Activated naive CD4-positive, alpha-beta T cell treated with anti-CD3 and anti-CD28 coated beads, Interleukin-2, amount 10 ng/mL, durations not matched to agents 7 days and 5 days (primary cell): ENCODE measurements at regions of chr12 and their contacts with region 1.

Region 1: DNA sequence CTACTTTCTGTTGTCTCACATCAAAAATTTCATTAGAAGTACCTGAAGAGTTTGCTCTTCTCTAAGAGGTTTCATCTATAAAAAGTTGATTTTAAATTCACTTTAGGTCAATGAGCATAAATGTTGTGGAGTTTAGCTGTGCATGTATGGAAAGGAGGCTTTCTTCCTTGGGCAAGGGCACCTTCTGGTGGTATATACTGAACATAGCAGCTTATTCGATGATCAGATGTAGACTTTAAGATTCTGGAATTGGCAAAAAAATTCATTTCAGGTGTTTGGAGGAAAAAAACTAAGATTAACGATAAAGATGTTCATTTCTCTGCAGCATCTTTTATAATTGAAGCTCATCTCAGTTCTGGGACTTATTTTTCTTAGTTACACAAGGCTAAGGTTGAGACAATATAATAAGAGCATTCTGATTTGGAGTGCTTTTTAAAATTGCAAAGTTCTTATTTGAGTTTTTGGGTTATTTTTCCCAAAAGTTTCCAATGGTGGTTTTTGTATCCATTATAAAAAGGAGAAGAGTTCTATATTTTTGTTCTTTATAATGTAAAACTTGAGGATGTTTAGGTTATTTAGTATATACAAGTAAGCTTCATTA is 46.8 kb downstream of the TMEM117 start:
- DNase-seq: peak; percentile 45
- H3K4me3 Mint-ChIP-seq: no peak overlapping the region
- H3K27ac Mint-ChIP-seq: no peak overlapping the region
- H3K4me1 Mint-ChIP-seq: no peaks in the 10 kb centered on the region
- H3K27me3 Mint-ChIP-seq: no peaks in the 10 kb centered on the region

Region 2: GRCh38 chr12:43444940-43445564 is 437.6 kb before region 1 on chr12:
- CTCF ChIA-PET with region 1: interaction called, 40 read pairs
- DNase-seq: peak; percentile 66
- H3K4me3 Mint-ChIP-seq: no peak overlapping the region
- H3K27ac Mint-ChIP-seq: no peak overlapping the region
- H3K4me1 Mint-ChIP-seq: no peaks in the 10 kb centered on the region
- H3K27me3 Mint-ChIP-seq: no peaks in the 10 kb centered on the region

Region 3: GRCh38 chr12:43776498-43776897 is 106.2 kb before region 1 on chr12:
- CTCF ChIA-PET with region 1: interaction called, 30 read pairs
- DNase-seq: peak; percentile 40
- H3K4me3 Mint-ChIP-seq: no peak overlapping the region
- H3K27ac Mint-ChIP-seq: no peak overlapping the region
- H3K4me1 Mint-ChIP-seq: no peaks in the 10 kb centered on the region
- H3K27me3 Mint-ChIP-seq: no peaks in the 10 kb centered on the region

Region 4: DNA sequence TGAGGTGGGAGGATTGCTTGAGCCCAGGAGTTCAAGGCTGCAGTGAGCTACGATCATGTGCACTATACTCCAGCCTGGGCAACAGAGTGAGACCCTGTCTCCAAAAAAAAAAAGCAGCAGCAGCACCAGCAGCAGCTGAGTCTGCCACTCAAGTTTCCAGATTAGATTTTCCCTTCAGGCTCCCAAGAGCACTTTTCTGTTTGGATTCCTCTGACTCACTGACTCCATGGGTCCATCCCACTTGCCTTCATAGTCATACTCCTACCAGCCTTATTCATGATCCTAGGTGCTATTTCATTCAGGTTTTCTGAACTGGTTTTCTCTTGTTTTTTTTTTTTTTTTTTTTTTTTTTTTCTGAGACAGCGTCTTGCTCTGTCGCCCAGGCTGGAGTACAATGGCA is 69.8 kb before region 1 on chr12:
- CTCF ChIA-PET with region 1: no interaction called
- DNase-seq: no peak
- H3K4me3 Mint-ChIP-seq: no peak overlapping the region
- H3K27ac Mint-ChIP-seq: no peak overlapping the region
- H3K4me1 Mint-ChIP-seq: peaks cover 8% of the 10 kb centered on the region
- H3K27me3 Mint-ChIP-seq: no peaks in the 10 kb centered on the region

Region 5: DNA sequence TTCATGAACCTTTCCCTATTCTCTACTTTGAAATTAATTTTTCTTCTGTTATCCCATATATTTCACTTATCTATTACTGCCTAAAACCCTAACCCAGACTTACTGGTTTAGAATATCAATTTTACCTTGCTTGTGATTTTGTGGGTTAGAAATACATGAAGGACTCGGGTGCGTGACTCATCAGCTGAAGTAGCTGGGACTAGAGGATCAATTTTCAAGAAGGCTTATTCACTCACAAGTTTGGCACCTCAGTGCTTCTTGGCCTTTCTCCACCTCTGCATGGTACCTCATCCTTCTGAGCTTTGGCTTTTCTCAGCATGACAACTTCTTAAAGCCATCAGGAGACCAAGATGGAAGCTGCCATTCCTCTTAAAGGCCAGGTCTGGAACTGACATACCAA is 11.0 kb after region 1 on chr12:
- CTCF ChIA-PET with region 1: no interaction called
- DNase-seq: no peak
- H3K4me3 Mint-ChIP-seq: no peak overlapping the region
- H3K27ac Mint-ChIP-seq: no peak overlapping the region
- H3K4me1 Mint-ChIP-seq: no peaks in the 10 kb centered on the region
- H3K27me3 Mint-ChIP-seq: no peaks in the 10 kb centered on the region